ENCODE measurements at regions of chr11 and their contacts with region 1.

Region 1: DNA sequence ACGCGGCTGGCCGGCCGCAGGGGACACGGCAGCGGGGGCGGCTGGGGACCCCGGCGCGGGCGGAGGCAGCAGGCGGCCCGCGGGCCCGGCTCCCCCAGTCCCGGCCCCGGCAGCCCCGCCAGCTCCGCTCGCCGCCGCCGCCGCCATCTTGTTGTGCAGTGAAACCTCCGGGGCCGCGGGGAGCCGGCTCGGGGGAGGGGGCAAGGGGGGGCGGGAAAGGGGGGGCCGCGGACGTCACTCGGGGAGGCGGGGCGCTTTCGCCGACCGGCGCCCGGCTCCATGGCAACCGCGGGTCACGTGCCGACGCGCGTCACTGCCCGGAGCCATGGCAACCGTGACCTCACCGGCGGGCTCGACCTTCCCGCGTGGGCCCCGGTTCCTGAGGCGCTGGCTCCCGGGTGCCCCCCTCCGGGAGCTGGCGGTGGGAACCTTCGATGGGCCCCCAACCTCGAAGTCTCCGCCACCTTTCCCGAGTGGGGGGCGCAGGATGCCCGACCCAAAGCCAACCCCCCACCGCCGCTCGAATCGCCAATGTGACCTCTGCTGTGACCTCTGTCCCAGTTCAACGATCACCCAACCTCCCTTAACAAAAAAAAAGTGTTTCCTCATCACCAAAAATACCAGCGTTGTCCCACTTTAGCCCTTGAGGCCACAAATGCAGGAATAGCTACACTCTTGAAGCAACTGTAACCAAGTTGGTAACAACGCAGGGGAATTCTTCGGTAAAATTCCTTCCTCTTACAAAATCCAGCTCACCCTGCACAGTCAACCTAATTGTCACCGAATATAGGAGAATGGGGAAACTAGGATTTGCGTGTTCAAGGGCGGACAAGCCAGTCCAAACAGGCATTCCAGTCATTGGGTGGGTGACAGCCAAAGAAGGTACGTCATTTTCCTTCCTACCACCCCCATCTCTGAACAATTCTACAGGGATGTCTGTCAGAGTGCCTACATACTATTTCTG is at the start of gene SIK3:
- DNase-seq: peak; percentile 95 to 98
- ATAC-seq: peak; percentile 95
- H3K4me3 ChIP-seq: peak within 1 kb of the TSS; percentile 93 to 97
- H3K27ac ChIP-seq: peak within 1 kb of the TSS; percentile 81 to 92
- H3K4me1 ChIP-seq: peaks cover 0 to 2% of the 10 kb centered on the region in 2 donors
- H3K27me3 ChIP-seq: no peaks in the 10 kb centered on the region
- total RNA-seq, gene SIK3: 59.2 to 64.2 TPM

Region 2: GRCh38 chr11:116986521-116987105 is 111.9 kb before region 1 on chr11:
- intact Hi-C with region 1: loop called in 1 of 2 experiments (anchors 10 kb)
- DNase-seq: no peak
- ATAC-seq: no peak
- H3K4me3 ChIP-seq: no peak overlapping the region
- H3K27ac ChIP-seq: no peak overlapping the region
- H3K4me1 ChIP-seq: peaks cover 0 to 15% of the 10 kb centered on the region in 2 donors
- H3K27me3 ChIP-seq: no peaks in the 10 kb centered on the region

Region 3: GRCh38 chr11:117273550-117274289 is 175.2 kb after region 1 on chr11:
- intact Hi-C with region 1: no loop called
- DNase-seq: no peak
- ATAC-seq: no peak
- H3K4me3 ChIP-seq: no peak overlapping the region
- H3K27ac ChIP-seq: no peak overlapping the region
- H3K4me1 ChIP-seq: no peaks in the 10 kb centered on the region
- H3K27me3 ChIP-seq: no peaks in the 10 kb centered on the region

Region 4: DNA sequence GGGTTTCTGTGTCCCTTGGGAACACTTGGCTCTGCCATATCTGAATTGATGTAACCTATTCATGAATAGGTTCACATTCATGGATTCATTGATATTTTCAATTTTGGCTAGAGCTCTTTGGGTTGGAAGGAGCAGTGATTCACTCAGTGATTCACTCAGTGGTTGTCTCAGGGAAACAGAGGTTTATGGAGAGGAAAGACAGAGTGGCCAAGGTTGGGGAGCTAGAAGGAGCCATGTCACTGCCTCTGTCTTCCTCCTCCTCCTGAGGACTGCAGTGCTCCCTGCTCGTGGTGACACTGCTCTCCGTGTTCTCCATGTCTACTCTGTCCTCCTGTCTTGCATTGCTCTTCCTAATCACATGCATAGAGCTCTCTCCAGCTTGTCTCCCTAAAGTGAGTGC is 246.5 kb after region 1 on chr11:
- intact Hi-C with region 1: no loop called
- DNase-seq: no peak
- ATAC-seq: no peak
- H3K4me3 ChIP-seq: no peak overlapping the region
- H3K27ac ChIP-seq: no peak overlapping the region
- H3K4me1 ChIP-seq: no peaks in the 10 kb centered on the region
- H3K27me3 ChIP-seq: no peaks in the 10 kb centered on the region